Activated CD8-positive, alpha-beta T cell treated with anti-CD3 and anti-CD28 coated beads for 36 hours (primary cell): ENCODE measurements at regions of chr3 and their contacts with region 1.

Region 1: DNA sequence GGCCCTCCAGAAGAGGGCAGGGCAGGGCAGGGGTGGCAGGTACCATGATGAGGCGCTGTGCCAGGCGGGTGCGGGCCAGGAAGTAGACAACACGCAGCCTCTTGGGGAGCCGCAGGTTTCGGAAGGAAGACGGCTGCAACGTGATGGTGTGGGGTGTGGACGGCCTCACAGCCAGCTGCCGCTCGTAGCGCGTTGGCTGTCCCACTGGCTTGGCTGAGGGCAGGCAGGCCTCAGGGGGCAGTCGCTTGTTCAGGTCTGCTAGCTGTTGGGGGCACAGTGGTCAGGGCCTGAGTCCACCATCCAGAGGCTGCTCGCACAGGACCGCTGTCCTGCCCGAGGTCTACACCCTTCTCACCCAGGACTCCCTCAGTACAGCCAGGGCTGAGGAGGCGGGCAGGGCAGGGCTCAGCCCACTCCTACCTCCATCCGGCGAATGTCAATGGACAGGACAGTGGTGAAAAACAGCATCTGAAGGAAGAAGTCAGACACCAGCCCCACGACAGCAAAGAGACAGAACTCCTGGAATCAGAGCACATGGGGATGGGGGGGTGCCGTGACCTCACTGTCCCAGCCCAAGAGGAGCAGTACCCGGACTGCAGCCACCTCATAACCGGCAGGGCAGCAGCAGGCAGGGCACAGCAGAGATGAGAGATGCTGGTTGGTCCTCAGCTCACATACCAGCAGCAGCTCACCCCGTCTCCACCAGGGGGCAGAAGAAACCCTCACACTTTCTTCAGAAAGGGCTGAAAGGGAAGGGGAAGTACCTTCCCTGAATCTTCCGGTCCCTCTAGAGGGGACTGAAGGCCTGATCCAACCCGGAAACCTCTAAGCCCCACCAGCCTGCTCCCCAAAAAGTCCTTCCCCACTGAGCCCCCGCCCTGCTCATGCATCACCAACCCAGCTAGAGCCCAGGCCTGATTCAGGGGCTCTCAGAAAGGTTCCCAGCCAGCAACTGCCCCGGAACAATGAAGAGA is 40.0 kb downstream of the PTPN23 start:
- DNase-seq: peak; percentile 98
- ATAC-seq: peak; percentile 98
- H3K4me3 Mint-ChIP-seq: peak overlapping the region; percentile 40
- H3K27ac Mint-ChIP-seq: peak overlapping the region; percentile 99
- H3K4me1 Mint-ChIP-seq: peaks cover 19% of the 10 kb centered on the region
- H3K27me3 Mint-ChIP-seq: no peaks in the 10 kb centered on the region
- CTCF ChIP-seq: peak; percentile 92

Region 2: DNA sequence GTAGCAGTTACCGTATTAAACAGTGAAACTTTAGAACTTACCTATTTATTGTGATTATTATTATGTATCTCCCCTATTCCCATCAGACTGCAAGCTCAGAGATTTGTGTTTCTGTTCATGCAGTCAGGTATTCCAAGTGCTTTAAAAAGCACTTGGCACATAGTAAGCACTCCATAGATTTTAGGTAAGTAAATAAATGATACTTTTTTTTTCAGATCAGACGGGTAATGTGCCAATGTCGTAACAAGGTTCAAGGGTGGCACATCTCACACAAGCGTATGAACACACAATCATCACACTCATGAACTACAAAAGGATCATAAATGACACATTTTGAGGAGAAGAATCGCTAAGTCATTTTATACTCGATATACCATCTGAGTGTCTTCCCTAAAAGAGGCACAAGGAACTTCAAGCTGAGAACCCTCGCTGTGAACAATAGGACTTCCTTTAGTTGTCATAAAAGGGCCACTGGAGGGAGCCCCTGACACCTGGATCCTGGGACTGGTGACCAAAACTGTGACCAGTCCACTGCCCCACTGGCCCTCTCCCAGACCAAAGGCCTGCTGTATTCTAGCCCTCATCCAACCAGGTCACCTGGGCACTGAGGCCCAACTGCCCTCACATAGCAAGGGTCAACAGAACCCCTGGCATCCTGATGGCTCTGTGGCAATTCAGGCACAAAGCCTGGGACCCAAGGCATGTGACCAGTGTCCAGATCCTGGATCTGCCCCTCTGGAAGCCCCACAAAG is 170.3 kb before region 1 on chr3:
- CTCF ChIA-PET with region 1: no interaction called
- POLR2A ChIA-PET with region 1: no interaction called
- intact Hi-C with region 1: no loop called
- DNase-seq: peak; percentile 10
- ATAC-seq: no peak
- H3K4me3 Mint-ChIP-seq: no peak overlapping the region
- H3K27ac Mint-ChIP-seq: no peak overlapping the region
- H3K4me1 Mint-ChIP-seq: no peaks in the 10 kb centered on the region
- H3K27me3 Mint-ChIP-seq: no peaks in the 10 kb centered on the region
- CTCF ChIP-seq: peak; percentile 18

Region 3: DNA sequence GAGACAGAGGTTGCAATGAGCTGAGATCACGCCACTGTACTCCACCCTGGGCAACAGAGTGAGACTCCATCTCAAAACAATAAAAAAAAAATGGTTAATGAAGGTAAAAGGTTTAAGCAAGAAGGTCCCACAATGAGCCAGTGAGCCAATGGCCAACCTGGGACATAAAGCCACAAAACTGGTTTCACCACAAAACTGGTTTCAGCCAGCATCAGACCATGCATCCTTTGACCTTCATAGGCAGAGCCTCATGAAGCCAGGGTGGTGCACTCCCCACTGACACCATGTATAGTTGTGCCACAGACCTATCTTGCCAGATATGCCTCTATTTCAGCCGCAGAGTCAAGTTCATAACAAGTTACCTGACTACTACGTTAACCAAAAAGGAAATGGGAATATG is 13.0 kb after region 1 on chr3:
- CTCF ChIA-PET with region 1: interaction called, 24 read pairs
- POLR2A ChIA-PET with region 1: interaction called, 4 read pairs
- intact Hi-C with region 1: no loop called
- DNase-seq: no peak
- ATAC-seq: no peak
- H3K4me3 Mint-ChIP-seq: no peak overlapping the region
- H3K27ac Mint-ChIP-seq: no peak overlapping the region
- H3K4me1 Mint-ChIP-seq: peaks cover 4% of the 10 kb centered on the region
- H3K27me3 Mint-ChIP-seq: no peaks in the 10 kb centered on the region
- CTCF ChIP-seq: no peak

Region 4: DNA sequence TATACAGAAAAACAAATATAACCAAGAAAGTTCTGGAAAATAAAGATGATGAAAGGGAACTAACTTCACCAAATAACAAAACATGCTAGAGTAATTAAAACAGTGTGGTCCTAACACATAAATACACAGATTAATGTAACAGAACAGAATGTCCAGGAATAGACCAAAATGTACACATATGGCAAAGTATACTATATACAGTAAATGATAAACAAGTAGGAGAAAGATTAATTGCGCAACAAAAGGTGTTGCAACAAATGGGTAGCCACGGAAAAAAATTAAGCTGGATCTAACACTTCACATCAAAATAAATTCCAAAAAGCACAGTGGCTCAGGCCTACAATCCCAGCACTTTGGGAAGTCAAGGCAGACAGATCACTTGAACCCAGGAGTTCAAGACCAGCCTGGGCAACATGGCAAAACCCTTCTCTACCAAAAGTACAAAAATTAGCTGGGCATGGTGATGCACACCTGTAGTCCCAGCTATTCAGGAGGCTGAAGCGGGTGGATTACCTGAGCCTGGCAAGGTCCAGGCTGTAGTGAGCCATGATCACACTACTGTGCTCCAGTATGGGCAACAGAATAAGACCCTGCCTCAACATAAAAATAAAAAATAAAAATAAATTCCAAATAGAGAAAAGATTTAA is 35.1 kb after region 1 on chr3:
- CTCF ChIA-PET with region 1: interaction called, 11 read pairs
- POLR2A ChIA-PET with region 1: no interaction called
- intact Hi-C with region 1: no loop called
- DNase-seq: no peak
- ATAC-seq: no peak
- H3K4me3 Mint-ChIP-seq: no peak overlapping the region
- H3K27ac Mint-ChIP-seq: no peak overlapping the region
- H3K4me1 Mint-ChIP-seq: peaks cover 18% of the 10 kb centered on the region
- H3K27me3 Mint-ChIP-seq: no peaks in the 10 kb centered on the region
- CTCF ChIP-seq: no peak

Region 5: GRCh38 chr3:47469616-47470015 is 48.8 kb after region 1 on chr3:
- CTCF ChIA-PET with region 1: interaction called, 99 read pairs
- POLR2A ChIA-PET with region 1: interaction called, 16 read pairs
- intact Hi-C with region 1: no loop called
- DNase-seq: no peak
- ATAC-seq: no peak
- H3K4me3 Mint-ChIP-seq: no peak overlapping the region
- H3K27ac Mint-ChIP-seq: no peak overlapping the region
- H3K4me1 Mint-ChIP-seq: peaks cover 30% of the 10 kb centered on the region
- H3K27me3 Mint-ChIP-seq: no peaks in the 10 kb centered on the region
- CTCF ChIP-seq: no peak

Region 6: GRCh38 chr3:47475570-47476329 is 55.0 kb after region 1 on chr3 and contains the start of gene SCAP:
- CTCF ChIA-PET with region 1: interaction called, 99 read pairs
- POLR2A ChIA-PET with region 1: interaction called, 16 read pairs
- intact Hi-C with region 1: loop called (anchors 2 kb)
- DNase-seq: peak; percentile 95
- ATAC-seq: peak; percentile 95
- H3K4me3 Mint-ChIP-seq: peak within 1 kb of the TSS; percentile 91
- H3K27ac Mint-ChIP-seq: peak within 1 kb of the TSS; percentile 90
- H3K4me1 Mint-ChIP-seq: peaks cover 31% of the 10 kb centered on the region
- H3K27me3 Mint-ChIP-seq: no peaks in the 10 kb centered on the region
- CTCF ChIP-seq: peak; percentile 99
- total RNA-seq, gene SCAP: 45.1 to 52.2 TPM

Region 7: GRCh38 chr3:47513125-47513929 is 92.5 kb after region 1 on chr3 and contains the start of gene ELP6:
- CTCF ChIA-PET with region 1: interaction called, 7 read pairs
- POLR2A ChIA-PET with region 1: interaction called, 4 read pairs
- intact Hi-C with region 1: loop called (anchors 5 kb)
- DNase-seq: peak; percentile 98
- ATAC-seq: peak; percentile 95
- H3K4me3 Mint-ChIP-seq: peak within 1 kb of the TSS; percentile 96
- H3K27ac Mint-ChIP-seq: peak within 1 kb of the TSS; percentile 99
- H3K4me1 Mint-ChIP-seq: peaks cover 14% of the 10 kb centered on the region
- H3K27me3 Mint-ChIP-seq: no peaks in the 10 kb centered on the region
- CTCF ChIP-seq: peak; percentile 53
- total RNA-seq, gene ELP6: 41.4 to 41.5 TPM

Region 8: GRCh38 chr3:47522082-47522987 is 101.5 kb after region 1 on chr3:
- CTCF ChIA-PET with region 1: interaction called, 12 read pairs
- POLR2A ChIA-PET with region 1: no interaction called
- intact Hi-C with region 1: no loop called
- DNase-seq: peak; percentile 90
- ATAC-seq: peak; percentile 94
- H3K4me3 Mint-ChIP-seq: no peak overlapping the region
- H3K27ac Mint-ChIP-seq: peak overlapping the region; percentile 31
- H3K4me1 Mint-ChIP-seq: peaks cover 7% of the 10 kb centered on the region
- H3K27me3 Mint-ChIP-seq: no peaks in the 10 kb centered on the region
- CTCF ChIP-seq: peak; percentile 94